Panc1 (cell line): ENCODE measurements at regions of chr22 and their contacts with region 1.

Region 1: DNA sequence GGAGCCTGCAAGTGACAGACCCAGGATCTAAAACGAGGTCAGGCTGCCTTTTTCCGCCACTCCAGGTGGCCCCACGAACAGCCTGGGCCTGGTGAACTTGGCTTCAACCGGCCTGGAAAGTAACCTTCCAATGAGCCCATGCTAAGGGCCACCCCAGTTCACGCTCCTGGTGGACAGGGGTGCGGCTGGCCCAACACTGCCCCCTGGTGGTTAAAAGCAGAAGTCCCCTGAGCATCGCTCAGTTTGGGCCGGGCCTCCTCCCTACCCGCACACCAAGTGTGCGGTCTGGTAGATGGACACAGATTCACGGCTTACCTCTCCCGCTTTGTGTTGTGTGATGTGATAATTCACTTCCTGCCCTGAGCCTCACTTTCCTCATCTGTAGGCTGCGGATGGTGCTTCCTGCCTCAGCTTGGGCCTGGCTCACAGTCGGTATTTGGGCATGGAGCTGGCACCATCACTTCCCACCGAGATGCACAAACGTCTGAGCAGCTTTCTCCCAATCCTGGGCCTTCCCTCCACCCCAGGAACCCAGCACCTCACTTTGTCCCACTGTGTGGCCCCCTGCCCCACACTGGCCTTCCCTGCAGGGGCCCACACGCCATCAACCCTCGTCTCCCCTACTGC is 13.7 kb upstream of the SEC14L3 start:
- DNase-seq: peak; percentile 25
- ATAC-seq: peak; percentile 96
- H3K4me3 ChIP-seq: no peak overlapping the region
- H3K27ac ChIP-seq: no peak overlapping the region
- H3K4me1 ChIP-seq: no peaks in the 10 kb centered on the region
- H3K27me3 ChIP-seq: no peaks in the 10 kb centered on the region
- CTCF ChIP-seq: peak; percentile 93

Region 2: GRCh38 chr22:30444632-30445437 is 40.6 kb before region 1 on chr22:
- CTCF ChIA-PET with region 1: interaction called, 5 read pairs
- POLR2A ChIA-PET with region 1: no interaction called
- in situ Hi-C with region 1: no loop called
- intact Hi-C with region 1: loop called (anchors 5 kb)
- DNase-seq: no peak
- ATAC-seq: peak; percentile 80
- H3K4me3 ChIP-seq: peak overlapping the region in 1 of 2 experiments; percentile 18; a peak in 1 of 4 replicates
- H3K27ac ChIP-seq: no peak overlapping the region
- H3K4me1 ChIP-seq: no peaks in the 10 kb centered on the region
- H3K27me3 ChIP-seq: no peaks in the 10 kb centered on the region
- CTCF ChIP-seq: peak; percentile 83

Region 3: DNA sequence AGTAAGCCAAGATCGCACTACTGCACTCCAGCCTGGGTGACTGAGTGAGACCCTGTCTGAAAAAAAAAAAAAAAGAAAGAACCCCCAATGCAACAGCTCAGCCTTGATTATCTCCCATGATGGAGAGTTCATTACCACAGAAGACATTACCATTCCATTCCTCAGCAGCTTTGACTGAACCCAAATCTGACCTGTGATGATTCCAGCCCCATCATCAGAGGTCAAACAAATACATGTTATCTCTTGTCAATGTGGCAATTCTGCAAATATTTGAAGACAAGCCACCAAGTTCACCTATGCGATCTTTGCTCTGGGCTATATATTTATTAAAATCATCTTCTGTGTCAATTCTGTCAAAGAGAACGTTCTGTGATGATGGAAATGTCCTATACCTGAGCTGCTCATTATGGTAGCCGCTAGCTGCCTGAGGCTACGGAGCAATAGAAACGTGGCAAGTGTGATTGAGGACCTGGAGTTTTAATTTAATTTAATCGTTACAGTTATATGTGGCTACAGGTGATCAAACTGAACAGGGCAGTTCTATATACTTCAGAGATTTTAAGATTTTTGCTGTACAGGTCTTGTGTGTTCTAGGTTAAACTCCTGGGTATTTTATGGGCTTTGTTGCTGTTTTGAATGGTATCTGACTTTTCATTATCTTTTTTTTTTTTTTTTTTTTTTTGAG is 12.1 kb after region 1 on chr22:
- CTCF ChIA-PET with region 1: interaction called, 10 read pairs
- POLR2A ChIA-PET with region 1: no interaction called
- in situ Hi-C with region 1: no loop called
- intact Hi-C with region 1: no loop called
- DNase-seq: no peak
- ATAC-seq: no peak
- H3K4me3 ChIP-seq: no peak overlapping the region
- H3K27ac ChIP-seq: no peak overlapping the region
- H3K4me1 ChIP-seq: no peaks in the 10 kb centered on the region
- H3K27me3 ChIP-seq: no peaks in the 10 kb centered on the region
- CTCF ChIP-seq: no peak